CD8-positive, alpha-beta T cell (primary cell): ENCODE measurements at regions of chr11 and their contacts with region 1.

Region 1: GRCh38 chr11:9534791-9535781 is 38.4 kb upstream of the WEE1 start:
- DNase-seq: peak; percentile 53 to 87 (median 79)
- ATAC-seq: peak; percentile 61
- H3K4me3 ChIP-seq: no peak overlapping the region
- H3K4me3 Mint-ChIP-seq: no peak overlapping the region
- H3K27ac ChIP-seq: no peak overlapping the region
- H3K27ac Mint-ChIP-seq: no peak overlapping the region
- H3K4me1 ChIP-seq: no peaks in the 10 kb centered on the region
- H3K4me1 Mint-ChIP-seq: no peaks in the 10 kb centered on the region
- H3K27me3 ChIP-seq: no peaks in the 10 kb centered on the region
- H3K27me3 Mint-ChIP-seq: no peaks in the 10 kb centered on the region
- CTCF ChIP-seq: peak; percentile 75

Region 2: DNA sequence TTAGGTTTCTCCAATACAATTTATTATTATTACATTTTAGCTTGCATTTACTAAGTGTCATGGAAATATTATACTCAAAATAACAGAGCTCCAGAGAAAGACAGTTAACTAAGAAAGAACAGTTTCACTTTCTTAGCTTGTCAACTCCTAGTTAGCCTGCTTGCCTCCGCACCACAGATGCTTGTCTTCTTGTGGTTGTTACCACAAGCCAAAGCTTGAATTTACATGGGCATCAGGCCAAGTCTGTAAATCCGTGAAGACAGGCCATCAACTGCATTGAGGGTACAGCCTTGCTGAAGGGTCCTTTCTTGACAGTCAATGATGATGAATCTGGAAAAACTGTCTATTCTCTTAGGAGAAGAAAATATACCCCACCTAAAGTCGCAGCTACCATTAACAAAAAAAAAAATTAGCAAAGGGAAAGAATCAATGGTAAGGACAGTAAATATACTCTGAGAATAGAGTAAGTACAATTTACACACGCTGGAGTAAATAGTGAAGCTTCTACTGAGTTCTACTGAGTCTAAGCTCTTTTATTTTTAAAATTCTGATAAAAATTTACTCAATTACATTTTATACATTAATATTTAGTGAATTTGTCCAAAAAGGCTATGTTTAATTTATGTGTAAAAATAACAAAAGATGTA is 254.3 kb before region 1 on chr11:
- CTCF ChIA-PET with region 1: no interaction called
- POLR2A ChIA-PET with region 1: no interaction called
- intact Hi-C with region 1: no loop called
- DNase-seq: peak in 8 of 9 experiments; percentile 29 to 85 (median 60)
- ATAC-seq: peak; percentile 87
- H3K4me3 ChIP-seq: peak overlapping the region in 1 of 2 experiments; percentile 17
- H3K4me3 Mint-ChIP-seq: peak overlapping the region; percentile 54
- H3K27ac ChIP-seq: no peak overlapping the region
- H3K27ac Mint-ChIP-seq: peak overlapping the region; percentile 66
- H3K4me1 ChIP-seq: peaks cover 18% of the 10 kb centered on the region
- H3K4me1 Mint-ChIP-seq: peaks cover 24% of the 10 kb centered on the region
- H3K27me3 ChIP-seq: no peaks in the 10 kb centered on the region
- H3K27me3 Mint-ChIP-seq: no peaks in the 10 kb centered on the region
- CTCF ChIP-seq: no peak

Region 3: DNA sequence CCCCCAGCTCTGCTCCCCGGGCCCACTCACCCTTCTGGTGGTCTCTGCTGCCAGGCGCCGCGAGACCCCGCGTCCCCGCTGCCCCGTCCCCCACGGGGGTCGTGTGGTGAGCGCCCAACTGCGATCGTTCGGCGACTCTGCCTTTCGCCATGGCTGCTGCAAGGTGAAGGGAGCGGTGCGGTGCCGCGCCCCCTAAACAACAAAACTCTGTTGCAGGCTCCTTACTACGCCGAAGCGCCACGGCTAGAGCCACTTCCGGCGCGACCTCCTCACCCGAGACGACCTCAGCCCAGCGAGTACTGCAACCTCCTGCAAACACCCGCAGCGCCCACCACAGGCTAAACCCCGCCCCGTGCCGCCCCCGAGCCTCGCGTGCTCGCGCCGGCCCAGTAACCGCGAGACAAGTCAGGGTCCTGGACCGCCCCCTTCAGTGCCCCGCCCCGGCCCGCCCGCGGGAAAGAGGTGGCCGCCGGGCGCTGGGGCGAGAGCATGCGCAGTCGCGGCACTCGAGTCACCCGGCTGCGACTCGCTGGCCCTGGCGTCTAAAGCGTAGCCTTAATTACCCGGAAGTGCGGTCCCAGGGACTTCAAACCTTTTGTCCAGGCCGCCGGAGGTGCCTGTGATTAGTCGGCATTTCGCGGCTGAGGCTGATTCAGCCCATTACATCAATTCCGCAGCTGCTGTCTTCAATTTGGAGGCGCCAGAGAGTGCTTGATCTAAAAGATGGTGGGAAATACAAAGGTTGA is 220.6 kb before region 1 on chr11 and contains the start of gene TMEM41B:
- CTCF ChIA-PET with region 1: no interaction called
- POLR2A ChIA-PET with region 1: no interaction called
- intact Hi-C with region 1: no loop called
- DNase-seq: peak; percentile 98 to 100 (median 100)
- ATAC-seq: peak; percentile 96
- H3K4me3 ChIP-seq: peak within 1 kb of the TSS; percentile 85 to 99
- H3K4me3 Mint-ChIP-seq: peak within 1 kb of the TSS; percentile 98
- H3K27ac ChIP-seq: peak within 1 kb of the TSS; percentile 87 to 97
- H3K27ac Mint-ChIP-seq: peak within 1 kb of the TSS; percentile 98
- H3K4me1 ChIP-seq: peaks cover 29% of the 10 kb centered on the region
- H3K4me1 Mint-ChIP-seq: peaks cover 35% of the 10 kb centered on the region
- H3K27me3 ChIP-seq: no peaks in the 10 kb centered on the region
- H3K27me3 Mint-ChIP-seq: peaks cover 2% of the 10 kb centered on the region
- CTCF ChIP-seq: no peak
- total RNA-seq, gene TMEM41B: 36.8 TPM

Region 4: DNA sequence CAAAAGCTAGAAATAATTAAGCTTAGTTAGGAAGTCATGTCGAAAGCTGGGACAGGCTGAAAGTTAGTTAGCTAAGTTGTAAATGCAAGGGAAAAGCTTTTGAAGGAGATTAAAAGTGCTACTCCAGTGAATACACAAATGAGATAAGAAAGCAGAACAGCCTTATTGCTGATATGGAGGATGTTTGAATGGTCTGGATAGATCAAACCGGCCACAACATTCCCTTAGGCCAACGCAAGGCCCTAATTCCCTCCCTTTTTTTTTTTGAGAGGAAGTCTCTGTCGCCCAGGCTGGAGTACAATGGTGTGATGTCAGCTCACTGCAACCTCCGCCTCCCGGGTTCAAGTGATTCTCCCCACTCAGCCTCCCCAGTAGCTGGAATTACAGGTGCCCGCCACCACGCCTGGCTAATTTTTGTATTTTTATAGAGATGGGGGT is 15.1 kb after region 1 on chr11:
- CTCF ChIA-PET with region 1: interaction called, 12 read pairs
- POLR2A ChIA-PET with region 1: interaction called, 3 read pairs
- intact Hi-C with region 1: no loop called
- DNase-seq: no peak
- ATAC-seq: no peak
- H3K4me3 ChIP-seq: no peak overlapping the region
- H3K4me3 Mint-ChIP-seq: no peak overlapping the region
- H3K27ac ChIP-seq: no peak overlapping the region
- H3K27ac Mint-ChIP-seq: no peak overlapping the region
- H3K4me1 ChIP-seq: no peaks in the 10 kb centered on the region
- H3K4me1 Mint-ChIP-seq: no peaks in the 10 kb centered on the region
- H3K27me3 ChIP-seq: no peaks in the 10 kb centered on the region
- H3K27me3 Mint-ChIP-seq: no peaks in the 10 kb centered on the region
- CTCF ChIP-seq: no peak

Region 5: GRCh38 chr11:9601037-9601875 is 66.2 kb after region 1 on chr11:
- CTCF ChIA-PET with region 1: interaction called, 17 read pairs
- POLR2A ChIA-PET with region 1: no interaction called
- intact Hi-C with region 1: no loop called
- DNase-seq: peak in 8 of 9 experiments; percentile 28 to 91 (median 57)
- ATAC-seq: peak; percentile 90
- H3K4me3 ChIP-seq: peak overlapping the region; percentile 5 to 28
- H3K4me3 Mint-ChIP-seq: peak overlapping the region; percentile 62
- H3K27ac ChIP-seq: peak overlapping the region; percentile 3 to 79
- H3K27ac Mint-ChIP-seq: peak overlapping the region; percentile 89
- H3K4me1 ChIP-seq: peaks cover 14% of the 10 kb centered on the region
- H3K4me1 Mint-ChIP-seq: peaks cover 20% of the 10 kb centered on the region
- H3K27me3 ChIP-seq: no peaks in the 10 kb centered on the region
- H3K27me3 Mint-ChIP-seq: peaks cover 3% of the 10 kb centered on the region
- CTCF ChIP-seq: no peak

Region 6: GRCh38 chr11:9606809-9607510 is 71.9 kb after region 1 on chr11:
- CTCF ChIA-PET with region 1: interaction called, 113 read pairs
- POLR2A ChIA-PET with region 1: no interaction called
- intact Hi-C with region 1: no loop called
- DNase-seq: no peak
- ATAC-seq: no peak
- H3K4me3 ChIP-seq: no peak overlapping the region
- H3K4me3 Mint-ChIP-seq: no peak overlapping the region
- H3K27ac ChIP-seq: no peak overlapping the region
- H3K27ac Mint-ChIP-seq: no peak overlapping the region
- H3K4me1 ChIP-seq: no peaks in the 10 kb centered on the region
- H3K4me1 Mint-ChIP-seq: peaks cover 5% of the 10 kb centered on the region
- H3K27me3 ChIP-seq: no peaks in the 10 kb centered on the region
- H3K27me3 Mint-ChIP-seq: peaks cover 3% of the 10 kb centered on the region
- CTCF ChIP-seq: no peak

Region 7: DNA sequence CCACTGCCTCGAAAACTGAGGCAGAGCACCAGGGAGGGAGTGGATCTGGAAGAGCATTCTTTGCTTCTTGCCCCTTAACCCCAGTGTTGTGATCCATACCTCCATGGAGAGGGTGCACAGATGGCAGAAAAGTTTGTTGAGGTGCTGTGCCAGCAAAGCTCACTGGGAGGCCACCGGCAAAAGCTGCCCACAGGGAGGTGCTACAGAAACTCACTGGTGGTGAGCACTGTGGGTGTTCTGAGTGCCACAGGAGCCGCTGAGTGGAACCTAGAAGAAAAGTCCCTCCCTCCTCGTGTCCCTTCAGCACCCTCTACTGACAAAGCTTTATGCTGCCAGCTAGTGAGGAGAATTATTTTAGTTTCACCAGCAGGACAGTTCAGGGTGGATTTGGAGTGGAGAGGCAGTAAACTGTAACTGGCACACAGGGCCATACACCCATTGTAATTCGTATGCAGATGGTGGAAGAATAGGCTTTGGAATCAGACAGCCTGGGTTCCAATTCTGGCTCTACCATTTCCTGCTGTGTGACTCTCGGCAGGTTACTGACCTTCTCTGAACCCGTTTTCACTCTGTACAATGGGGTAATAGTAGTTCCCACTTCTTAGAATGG is 213.4 kb after region 1 on chr11:
- CTCF ChIA-PET with region 1: interaction called, 61 read pairs
- POLR2A ChIA-PET with region 1: no interaction called
- intact Hi-C with region 1: loop called in 1 of 2 experiments (anchors 1 kb)
- DNase-seq: peak; percentile 15 to 82 (median 55)
- ATAC-seq: peak; percentile 98
- H3K4me3 ChIP-seq: no peak overlapping the region
- H3K4me3 Mint-ChIP-seq: no peak overlapping the region
- H3K27ac ChIP-seq: no peak overlapping the region
- H3K27ac Mint-ChIP-seq: no peak overlapping the region
- H3K4me1 ChIP-seq: no peaks in the 10 kb centered on the region
- H3K4me1 Mint-ChIP-seq: peaks cover 3% of the 10 kb centered on the region
- H3K27me3 ChIP-seq: no peaks in the 10 kb centered on the region
- H3K27me3 Mint-ChIP-seq: no peaks in the 10 kb centered on the region
- CTCF ChIP-seq: peak; percentile 55

Region 8: DNA sequence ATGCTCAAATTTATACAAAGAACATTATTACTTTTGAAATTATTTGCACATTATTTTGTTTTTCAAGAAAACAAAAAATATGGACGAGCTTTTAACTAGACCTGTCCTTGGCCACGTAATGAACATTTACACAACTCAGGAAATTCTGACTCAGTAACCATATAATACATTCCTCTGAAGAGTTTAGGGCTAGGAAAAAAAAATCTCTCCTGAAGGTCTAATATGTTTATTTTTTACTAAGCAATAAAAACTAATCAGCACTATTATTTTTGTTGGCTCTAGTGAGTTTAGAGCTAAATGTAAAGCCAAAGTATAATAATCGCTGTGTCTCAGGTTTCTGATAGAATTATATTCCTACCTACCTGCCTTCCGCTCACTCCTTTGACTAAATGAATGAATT is 316.3 kb after region 1 on chr11:
- CTCF ChIA-PET with region 1: no interaction called
- POLR2A ChIA-PET with region 1: no interaction called
- intact Hi-C with region 1: no loop called
- DNase-seq: no peak
- ATAC-seq: no peak
- H3K4me3 ChIP-seq: no peak overlapping the region
- H3K4me3 Mint-ChIP-seq: no peak overlapping the region
- H3K27ac ChIP-seq: no peak overlapping the region
- H3K27ac Mint-ChIP-seq: no peak overlapping the region
- H3K4me1 ChIP-seq: no peaks in the 10 kb centered on the region
- H3K4me1 Mint-ChIP-seq: no peaks in the 10 kb centered on the region
- H3K27me3 ChIP-seq: no peaks in the 10 kb centered on the region
- H3K27me3 Mint-ChIP-seq: no peaks in the 10 kb centered on the region
- CTCF ChIP-seq: no peak

Region 9: DNA sequence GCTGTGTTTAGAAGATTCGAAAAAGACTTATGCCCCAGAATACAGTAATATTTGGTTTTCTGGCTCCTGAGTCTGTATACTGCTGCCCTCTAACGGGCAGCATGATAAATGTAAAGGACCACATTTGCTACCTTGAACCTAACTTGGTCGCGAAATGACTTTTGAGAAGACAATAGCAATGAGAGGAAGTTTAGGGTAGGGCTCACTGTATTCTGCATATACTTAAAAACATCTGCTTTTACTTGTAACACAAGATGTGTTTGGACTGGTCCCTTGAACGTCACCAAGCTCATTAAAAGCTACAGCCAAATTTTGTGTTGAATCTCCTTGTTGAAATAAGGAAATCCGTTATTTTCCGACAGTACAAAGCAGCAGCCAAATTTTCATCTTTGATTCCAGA is 437.9 kb after region 1 on chr11:
- CTCF ChIA-PET with region 1: no interaction called
- POLR2A ChIA-PET with region 1: no interaction called
- intact Hi-C with region 1: loop called (anchors 5 to 10 kb)
- DNase-seq: peak in 2 of 9 experiments; percentile 23 to 54
- ATAC-seq: peak; percentile 54
- H3K4me3 ChIP-seq: no peak overlapping the region
- H3K4me3 Mint-ChIP-seq: no peak overlapping the region
- H3K27ac ChIP-seq: no peak overlapping the region
- H3K27ac Mint-ChIP-seq: no peak overlapping the region
- H3K4me1 ChIP-seq: no peaks in the 10 kb centered on the region
- H3K4me1 Mint-ChIP-seq: no peaks in the 10 kb centered on the region
- H3K27me3 ChIP-seq: no peaks in the 10 kb centered on the region
- H3K27me3 Mint-ChIP-seq: no peaks in the 10 kb centered on the region
- CTCF ChIP-seq: peak; percentile 53

Region 10: GRCh38 chr11:10322830-10323792 is 788.0 kb after region 1 on chr11:
- CTCF ChIA-PET with region 1: interaction called, 4 read pairs
- POLR2A ChIA-PET with region 1: no interaction called
- intact Hi-C with region 1: loop called in 1 of 2 experiments (anchors 2 kb)
- DNase-seq: peak in 5 of 9 experiments; percentile 26 to 67 (median 38)
- ATAC-seq: peak; percentile 82
- H3K4me3 ChIP-seq: no peak overlapping the region
- H3K4me3 Mint-ChIP-seq: no peak overlapping the region
- H3K27ac ChIP-seq: no peak overlapping the region
- H3K27ac Mint-ChIP-seq: no peak overlapping the region
- H3K4me1 ChIP-seq: no peaks in the 10 kb centered on the region
- H3K4me1 Mint-ChIP-seq: peaks cover 3% of the 10 kb centered on the region
- H3K27me3 ChIP-seq: no peaks in the 10 kb centered on the region
- H3K27me3 Mint-ChIP-seq: peaks cover 4% of the 10 kb centered on the region
- CTCF ChIP-seq: peak; percentile 55